ENCODE measurements at regions of chr1 and their contacts with region 1.

Region 1: GRCh38 chr1:234154320-234155251 is 218.7 kb upstream of the COA6 start:
- DNase-seq: peak in 6 of 9 donors; percentile 7 to 54 (median 46)
- ATAC-seq: peak; percentile 31
- H3K4me3 ChIP-seq: no peak overlapping the region
- H3K4me3 Mint-ChIP-seq: no peak overlapping the region
- H3K27ac ChIP-seq: no peak overlapping the region
- H3K27ac Mint-ChIP-seq: no peak overlapping the region
- H3K4me1 ChIP-seq: no peaks in the 10 kb centered on the region
- H3K4me1 Mint-ChIP-seq: no peaks in the 10 kb centered on the region
- H3K27me3 ChIP-seq: no peaks in the 10 kb centered on the region
- H3K27me3 Mint-ChIP-seq: peaks cover 4 to 25% (median 14%) of the 10 kb centered on the region in 5 donors

Region 2: GRCh38 chr1:234188454-234188792 is 33.8 kb after region 1 on chr1:
- CTCF ChIA-PET with region 1: no interaction called
- POLR2A ChIA-PET with region 1: no interaction called
- intact Hi-C with region 1: loop called in 1 of 2 experiments (anchors 1 kb)
- DNase-seq: no peak
- ATAC-seq: no peak
- H3K4me3 ChIP-seq: no peak overlapping the region
- H3K4me3 Mint-ChIP-seq: no peak overlapping the region
- H3K27ac ChIP-seq: no peak overlapping the region
- H3K27ac Mint-ChIP-seq: no peak overlapping the region
- H3K4me1 ChIP-seq: no peaks in the 10 kb centered on the region
- H3K4me1 Mint-ChIP-seq: peaks cover 0 to 9% (median 0%) of the 10 kb centered on the region in 7 donors
- H3K27me3 ChIP-seq: no peaks in the 10 kb centered on the region
- H3K27me3 Mint-ChIP-seq: peaks cover 39 to 65% (median 58%) of the 10 kb centered on the region in 5 donors

Measured in naive thymus-derived CD4-positive, alpha-beta T cell (primary cell).